Gastrocnemius medialis (tissue), 4 donors: ENCODE measurements at regions of chr1 and their contacts with region 1.

Region 1: GRCh38 chr1:168509875-168510791 is 33.7 kb downstream of the XCL2 start:
- DNase-seq: no peak
- ATAC-seq: peak in 1 of 2 donors; percentile 30
- H3K4me3 ChIP-seq: no peak overlapping the region
- H3K27ac ChIP-seq: no peak overlapping the region
- H3K4me1 ChIP-seq: peaks cover 0 to 15% of the 10 kb centered on the region in 2 donors
- H3K27me3 ChIP-seq: no peaks in the 10 kb centered on the region
- CTCF ChIP-seq: no peak
- POLR2A ChIP-seq: no peak

Region 2: GRCh38 chr1:169091480-169091941 is 581.4 kb after region 1 on chr1:
- in situ Hi-C with region 1: no loop called
- intact Hi-C with region 1: loop called (anchors 5 kb)
- DNase-seq: peak in 1 of 2 donors; percentile 65
- ATAC-seq: peak; percentile 84 to 92
- H3K4me3 ChIP-seq: no peak overlapping the region
- H3K27ac ChIP-seq: peak overlapping the region in 2 of 4 donors; percentile 7 to 28
- H3K4me1 ChIP-seq: peaks cover 0 to 4% of the 10 kb centered on the region in 2 donors
- H3K27me3 ChIP-seq: no peaks in the 10 kb centered on the region
- CTCF ChIP-seq: no peak
- POLR2A ChIP-seq: no peak